ENCODE measurements at regions of chr4 and their contacts with region 1.

Region 1: DNA sequence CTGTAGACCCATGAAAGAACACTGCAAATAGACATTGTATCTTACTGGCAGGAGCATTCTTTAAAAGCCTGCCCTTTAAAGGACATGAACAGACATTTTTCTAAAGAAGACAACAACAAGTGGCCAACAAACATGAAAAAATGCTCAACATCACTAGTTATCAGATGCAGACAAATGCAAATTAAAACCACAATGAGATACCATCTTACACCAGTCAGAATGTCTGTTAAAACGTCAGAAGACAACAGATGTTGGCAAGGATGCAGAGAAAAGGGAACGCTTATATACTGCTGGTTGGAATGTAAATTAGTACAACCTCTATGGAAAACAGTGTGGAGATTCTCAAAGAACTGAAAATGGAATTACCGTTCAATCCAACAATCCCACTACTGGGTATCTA is 77.2 kb downstream of the ATP10D start:
- DNase-seq: no peak
- H3K4me3 Mint-ChIP-seq: no peak overlapping the region
- H3K27ac Mint-ChIP-seq: no peak overlapping the region
- H3K4me1 Mint-ChIP-seq: peaks cover 10% of the 10 kb centered on the region
- H3K27me3 Mint-ChIP-seq: no peaks in the 10 kb centered on the region
- CTCF ChIP-seq: no peak

Region 2: DNA sequence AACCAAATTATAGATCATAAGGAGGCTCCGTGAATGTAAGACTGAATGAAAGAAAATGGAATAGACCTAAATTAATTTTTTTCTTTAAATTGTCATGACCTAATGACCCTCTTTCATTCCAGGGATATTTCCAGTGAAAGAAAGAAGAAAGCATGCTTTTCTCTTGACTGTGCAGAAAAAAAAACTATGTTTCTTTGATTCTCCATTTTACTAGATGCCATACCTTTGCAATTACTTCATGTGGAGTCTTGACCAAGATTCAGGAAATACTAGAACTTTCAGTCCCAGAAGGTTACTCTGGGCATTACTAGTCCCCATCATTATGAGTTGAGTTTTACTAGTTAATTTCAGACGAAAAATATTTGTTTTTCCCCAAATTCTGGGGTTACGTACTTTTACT is 92.3 kb before region 1 on chr4:
- CTCF ChIA-PET with region 1: no interaction called
- intact Hi-C with region 1: loop called (anchors 5 kb)
- DNase-seq: no peak
- H3K4me3 Mint-ChIP-seq: no peak overlapping the region
- H3K27ac Mint-ChIP-seq: no peak overlapping the region
- H3K4me1 Mint-ChIP-seq: peaks cover 22% of the 10 kb centered on the region
- H3K27me3 Mint-ChIP-seq: no peaks in the 10 kb centered on the region
- CTCF ChIP-seq: no peak

Region 3: DNA sequence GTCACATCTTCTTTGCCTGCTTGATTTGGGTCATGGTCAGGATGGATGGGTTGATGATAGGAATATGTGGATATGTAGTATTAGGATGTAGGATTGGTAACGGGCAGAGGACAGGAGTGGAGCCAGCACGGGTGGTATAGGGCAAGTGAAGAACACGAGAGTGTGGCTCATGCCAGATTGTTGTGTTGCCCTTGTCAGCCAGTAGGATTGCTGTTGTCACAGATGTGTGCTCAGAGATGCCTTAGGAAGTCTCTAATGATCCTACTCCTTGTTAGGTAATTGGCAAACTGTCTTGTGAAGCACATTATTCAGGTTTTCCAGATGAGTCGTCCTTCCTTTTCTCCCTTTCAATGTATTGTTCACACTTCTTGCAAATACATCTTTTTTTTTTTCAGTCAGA is 71.7 kb before region 1 on chr4:
- CTCF ChIA-PET with region 1: no interaction called
- intact Hi-C with region 1: loop called (anchors 5 kb)
- DNase-seq: no peak
- H3K4me3 Mint-ChIP-seq: no peak overlapping the region
- H3K27ac Mint-ChIP-seq: no peak overlapping the region
- H3K4me1 Mint-ChIP-seq: no peaks in the 10 kb centered on the region
- H3K27me3 Mint-ChIP-seq: no peaks in the 10 kb centered on the region
- CTCF ChIP-seq: no peak

Region 4: GRCh38 chr4:47752214-47752613 is 189.9 kb after region 1 on chr4:
- CTCF ChIA-PET with region 1: no interaction called
- intact Hi-C with region 1: no loop called
- DNase-seq: no peak
- H3K4me3 Mint-ChIP-seq: no peak overlapping the region
- H3K27ac Mint-ChIP-seq: no peak overlapping the region
- H3K4me1 Mint-ChIP-seq: no peaks in the 10 kb centered on the region
- H3K27me3 Mint-ChIP-seq: no peaks in the 10 kb centered on the region
- CTCF ChIP-seq: no peak

Measured in Calu3 (cell line).